Activated B cell treated with CpG ODN at 0.5 μM for 24 hours (primary cell): ENCODE measurements at regions of chr11 and their contacts with region 1.

Region 1: GRCh38 chr11:111378861-111379601 is at the start of gene POU2AF1:
- DNase-seq: peak; percentile 76
- ATAC-seq: peak; percentile 69
- H3K4me3 Mint-ChIP-seq: peak within 1 kb of the TSS; percentile 96
- H3K27ac Mint-ChIP-seq: peak within 1 kb of the TSS; percentile 98
- H3K4me1 Mint-ChIP-seq: peaks cover 88% of the 10 kb centered on the region
- H3K27me3 Mint-ChIP-seq: no peaks in the 10 kb centered on the region
- CTCF ChIP-seq: no peak
- total RNA-seq, gene POU2AF1: 141 and 155 TPM in 2 replicates

Region 2: DNA sequence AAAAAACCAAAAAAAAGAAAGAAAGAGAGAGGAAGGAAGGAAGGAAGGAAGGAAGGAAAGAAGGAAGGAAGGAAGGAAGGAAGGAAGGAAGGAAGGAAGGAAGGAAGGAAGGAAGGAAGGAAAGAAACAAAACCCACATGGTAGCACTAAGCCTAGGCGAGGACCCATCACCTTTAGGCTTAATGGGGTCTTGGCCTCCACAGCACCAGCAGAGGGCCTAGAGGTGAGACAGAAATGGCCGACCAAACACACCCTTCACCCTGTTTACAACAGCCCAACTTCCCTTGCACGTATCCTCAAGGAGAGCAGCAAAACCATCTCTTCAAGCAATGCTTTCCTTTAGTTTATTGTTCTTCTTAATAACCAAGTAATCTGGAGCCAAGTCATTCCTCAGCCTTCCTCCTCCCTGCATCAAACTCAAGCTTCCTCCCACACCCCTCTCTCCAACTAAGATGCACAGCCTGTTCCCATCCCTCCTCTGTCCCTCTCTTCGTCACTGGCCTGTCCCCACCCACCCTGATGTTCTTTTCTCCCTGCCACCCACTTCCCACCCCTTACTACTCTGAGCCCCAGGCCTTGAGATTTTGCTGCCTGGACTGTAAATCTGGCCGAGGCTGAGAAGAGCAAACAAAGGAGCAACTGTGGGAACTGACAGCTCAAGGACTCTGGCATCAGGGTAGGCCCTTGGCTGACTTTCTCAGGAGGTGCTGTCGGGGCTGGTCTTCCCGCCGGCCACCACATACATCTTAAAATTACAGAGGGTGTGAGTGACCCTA is 25.9 kb before region 1 on chr11:
- CTCF ChIA-PET with region 1: no interaction called
- POLR2A ChIA-PET with region 1: interaction called, 95 read pairs
- intact Hi-C with region 1: no loop called
- DNase-seq: no peak
- ATAC-seq: peak; percentile 53
- H3K4me3 Mint-ChIP-seq: no peak overlapping the region
- H3K27ac Mint-ChIP-seq: peak overlapping the region; percentile 83
- H3K4me1 Mint-ChIP-seq: peaks cover 62% of the 10 kb centered on the region
- H3K27me3 Mint-ChIP-seq: no peaks in the 10 kb centered on the region
- CTCF ChIP-seq: no peak

Region 3: DNA sequence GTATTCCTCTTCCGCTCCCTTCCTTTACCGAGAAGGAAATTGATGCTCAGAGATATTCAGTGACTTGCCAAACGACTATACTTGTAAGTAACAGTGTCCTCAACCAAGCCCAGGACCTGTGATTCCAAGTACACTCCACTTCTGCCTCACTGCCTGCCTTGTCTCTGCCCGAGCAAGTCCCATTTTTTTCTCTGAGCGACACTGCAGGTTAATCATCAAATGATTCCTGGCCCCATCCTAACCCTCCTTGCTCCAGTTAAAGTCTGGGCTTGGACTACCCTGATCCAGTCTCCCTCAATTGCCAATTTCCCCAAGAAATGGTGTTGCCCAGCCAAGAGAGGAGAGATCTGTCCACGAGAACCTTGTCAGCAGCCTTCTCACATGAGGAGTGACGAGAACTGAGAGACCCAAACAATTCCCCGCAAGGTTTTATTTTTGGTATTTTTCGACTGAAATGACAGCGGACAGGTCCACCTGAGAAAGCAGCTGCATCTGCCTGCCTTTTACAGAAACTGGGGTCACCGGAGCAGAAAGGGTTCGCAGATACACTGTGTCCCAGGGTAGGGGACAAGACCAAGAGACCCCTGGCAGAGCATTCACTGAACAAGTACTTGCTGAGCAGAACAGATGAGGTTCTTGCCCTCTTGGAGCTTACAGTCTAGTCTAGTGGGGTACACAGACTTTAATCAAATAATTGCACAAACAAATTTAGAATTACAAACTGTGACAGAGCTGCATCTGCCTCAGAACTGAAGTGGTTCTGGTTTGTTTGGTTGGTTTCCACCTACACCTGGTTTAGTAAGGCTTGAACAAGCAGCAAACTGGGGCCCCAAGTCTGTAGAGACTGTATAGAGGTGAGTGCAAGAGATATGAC is 11.4 kb before region 1 on chr11:
- CTCF ChIA-PET with region 1: interaction called, 5 read pairs
- POLR2A ChIA-PET with region 1: interaction called, 100 read pairs
- intact Hi-C with region 1: loop called (anchors 1 kb)
- DNase-seq: no peak
- ATAC-seq: peak; percentile 51
- H3K4me3 Mint-ChIP-seq: peak overlapping the region; percentile 67
- H3K27ac Mint-ChIP-seq: peak overlapping the region; percentile 98
- H3K4me1 Mint-ChIP-seq: no peaks in the 10 kb centered on the region
- H3K27me3 Mint-ChIP-seq: no peaks in the 10 kb centered on the region
- CTCF ChIP-seq: no peak

Region 4: GRCh38 chr11:111399187-111400031 is 20.4 kb after region 1 on chr11:
- CTCF ChIA-PET with region 1: interaction called, 5 read pairs
- POLR2A ChIA-PET with region 1: interaction called, 91 read pairs
- intact Hi-C with region 1: loop called (anchors 1 kb)
- DNase-seq: no peak
- ATAC-seq: peak; percentile 54
- H3K4me3 Mint-ChIP-seq: peak overlapping the region; percentile 82
- H3K27ac Mint-ChIP-seq: peak overlapping the region; percentile 88
- H3K4me1 Mint-ChIP-seq: peaks cover 88% of the 10 kb centered on the region
- H3K27me3 Mint-ChIP-seq: no peaks in the 10 kb centered on the region
- CTCF ChIP-seq: no peak